AG04450 (cell line): ENCODE measurements at regions of chr11 and their contacts with region 1.

Region 1: DNA sequence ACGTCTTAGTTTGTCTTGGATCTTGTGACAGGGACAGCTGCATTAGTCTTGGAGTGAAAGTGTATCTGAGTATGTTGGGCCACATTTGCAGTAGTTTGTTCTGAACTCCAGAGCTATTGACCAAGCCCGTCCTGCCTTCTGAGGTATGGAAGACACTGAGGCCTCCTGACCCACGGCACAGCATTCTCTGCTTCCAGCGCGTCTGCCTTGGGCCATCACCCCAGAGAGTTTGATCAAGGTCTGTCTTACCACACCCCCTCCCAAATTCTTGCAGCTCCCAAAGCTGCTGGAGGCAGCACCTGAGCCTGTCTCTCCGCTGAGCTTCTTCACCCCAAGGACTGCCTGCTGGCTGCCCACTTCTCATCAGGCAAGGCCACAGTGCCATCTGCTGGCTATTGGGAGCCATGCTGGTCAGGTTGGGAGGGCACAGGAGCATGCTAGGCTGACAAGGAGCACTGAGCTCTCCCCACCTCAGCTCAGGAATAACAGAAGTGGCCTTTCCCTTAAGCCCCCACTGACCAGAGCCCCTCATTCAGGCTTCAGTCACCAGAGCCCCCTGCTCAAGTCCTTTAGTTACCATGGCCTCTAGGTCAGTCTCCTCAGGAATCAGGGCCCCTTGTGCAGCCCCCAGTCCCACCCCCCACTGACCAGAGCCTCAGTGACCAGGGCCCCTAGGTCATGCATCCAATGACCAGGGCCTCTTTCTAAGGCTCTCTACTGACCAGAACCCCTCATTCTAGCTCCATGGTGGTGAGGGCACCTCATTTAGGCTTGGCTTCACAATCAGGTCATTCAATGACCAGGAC is 27.2 kb upstream of the SMPD1 start:
- DNase-seq: peak; percentile 54
- H3K4me3 ChIP-seq: no peak overlapping the region
- H3K27ac ChIP-seq: no peak overlapping the region
- H3K27me3 ChIP-seq: no peaks in the 10 kb centered on the region
- CTCF ChIP-seq: peak; percentile 98

Region 2: DNA sequence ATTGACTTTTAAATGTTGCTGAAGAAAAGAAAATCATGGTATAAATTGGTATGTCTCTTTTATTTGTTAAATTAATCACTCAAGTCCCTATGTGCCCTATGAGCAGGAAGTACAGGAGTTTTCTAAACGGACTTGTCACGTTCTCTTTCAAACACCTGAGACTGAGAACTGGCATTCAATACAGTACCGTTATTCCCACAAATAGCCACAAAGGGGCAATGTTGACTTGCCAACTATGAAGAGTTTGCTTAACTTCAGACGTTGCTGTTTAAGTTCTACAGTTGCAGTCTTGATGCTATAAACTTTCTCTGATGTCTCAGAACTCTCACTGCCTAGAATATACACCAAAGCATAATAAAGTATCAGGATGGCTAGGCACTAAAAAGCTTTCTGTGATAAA is 340.1 kb before region 1 on chr11:
- CTCF ChIA-PET with region 1: interaction called, 36 read pairs
- POLR2A ChIA-PET with region 1: no interaction called
- DNase-seq: no peak
- H3K4me3 ChIP-seq: no peak overlapping the region
- H3K27ac ChIP-seq: no peak overlapping the region
- H3K27me3 ChIP-seq: no peaks in the 10 kb centered on the region
- CTCF ChIP-seq: peak; percentile 45

Region 3: GRCh38 chr11:6251120-6251733 is 111.8 kb before region 1 on chr11:
- CTCF ChIA-PET with region 1: interaction called, 153 read pairs
- POLR2A ChIA-PET with region 1: interaction called, 3 read pairs
- DNase-seq: peak; percentile 32
- H3K4me3 ChIP-seq: no peak overlapping the region
- H3K27ac ChIP-seq: no peak overlapping the region
- H3K27me3 ChIP-seq: peaks cover 7% of the 10 kb centered on the region
- CTCF ChIP-seq: peak; percentile 92

Region 4: DNA sequence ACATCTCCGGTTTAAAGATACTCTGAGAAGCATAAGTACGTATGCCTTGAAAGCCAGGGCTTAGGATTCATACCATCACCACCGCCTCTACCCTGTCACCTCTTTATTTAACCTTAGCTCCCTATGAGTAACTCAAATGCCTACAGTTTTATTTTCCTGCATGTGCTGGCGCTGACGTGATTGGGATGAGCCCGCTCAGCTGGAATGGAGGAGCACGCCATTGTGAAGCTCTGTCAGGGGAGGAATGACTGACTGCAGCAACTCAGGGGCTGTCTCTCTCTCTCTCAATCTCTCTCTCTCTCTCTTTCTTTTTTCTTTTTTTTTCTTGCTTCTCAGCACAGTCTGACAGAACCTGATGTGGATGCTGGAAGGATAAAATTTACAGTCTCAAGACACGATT is 55.2 kb before region 1 on chr11:
- CTCF ChIA-PET with region 1: interaction called, 38 read pairs
- POLR2A ChIA-PET with region 1: no interaction called
- DNase-seq: no peak
- H3K4me3 ChIP-seq: no peak overlapping the region
- H3K27ac ChIP-seq: no peak overlapping the region
- H3K27me3 ChIP-seq: no peaks in the 10 kb centered on the region
- CTCF ChIP-seq: no peak

Region 5: GRCh38 chr11:6333112-6333511 is 30.0 kb before region 1 on chr11:
- CTCF ChIA-PET with region 1: interaction called, 15 read pairs
- POLR2A ChIA-PET with region 1: no interaction called
- DNase-seq: no peak
- H3K4me3 ChIP-seq: no peak overlapping the region
- H3K27ac ChIP-seq: no peak overlapping the region
- H3K27me3 ChIP-seq: peaks cover 2% of the 10 kb centered on the region
- CTCF ChIP-seq: no peak

Region 6: DNA sequence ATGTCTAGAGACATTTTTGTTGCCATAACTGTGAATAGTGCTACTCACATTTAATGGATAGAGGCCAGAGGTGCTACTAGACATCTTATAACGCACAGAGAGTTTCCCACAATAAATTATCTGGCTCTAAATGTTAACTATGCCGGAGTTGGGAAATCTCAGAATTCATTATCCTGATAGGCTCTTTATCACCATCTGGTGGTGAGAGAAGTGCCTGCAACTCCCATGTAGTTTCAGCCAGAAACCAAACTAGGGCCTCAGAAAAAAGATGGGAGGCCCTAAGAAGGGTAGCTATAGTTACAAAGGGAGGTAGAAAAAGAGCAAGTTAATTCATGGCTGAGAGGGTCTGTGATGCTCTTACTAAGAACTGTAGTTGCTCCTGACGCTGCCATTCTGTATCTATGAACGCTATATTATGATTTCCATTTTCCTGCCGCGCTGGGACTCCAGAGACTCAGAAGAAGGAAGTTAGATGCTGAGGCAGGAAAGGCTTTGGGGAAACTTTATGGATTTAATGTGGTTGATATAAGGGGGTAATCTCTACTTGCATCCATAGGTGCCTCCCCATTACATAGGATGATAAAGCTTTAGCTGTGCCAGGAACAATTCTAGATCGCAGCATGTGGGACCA is 342.9 kb after region 1 on chr11:
- CTCF ChIA-PET with region 1: interaction called, 11 read pairs
- POLR2A ChIA-PET with region 1: no interaction called
- DNase-seq: no peak
- H3K4me3 ChIP-seq: no peak overlapping the region
- H3K27ac ChIP-seq: no peak overlapping the region
- H3K27me3 ChIP-seq: no peaks in the 10 kb centered on the region
- CTCF ChIP-seq: peak; percentile 98